Sciatic nerve (tissue), 2 donors: ENCODE measurements at regions of chr20 and their contacts with region 1.

Region 1: DNA sequence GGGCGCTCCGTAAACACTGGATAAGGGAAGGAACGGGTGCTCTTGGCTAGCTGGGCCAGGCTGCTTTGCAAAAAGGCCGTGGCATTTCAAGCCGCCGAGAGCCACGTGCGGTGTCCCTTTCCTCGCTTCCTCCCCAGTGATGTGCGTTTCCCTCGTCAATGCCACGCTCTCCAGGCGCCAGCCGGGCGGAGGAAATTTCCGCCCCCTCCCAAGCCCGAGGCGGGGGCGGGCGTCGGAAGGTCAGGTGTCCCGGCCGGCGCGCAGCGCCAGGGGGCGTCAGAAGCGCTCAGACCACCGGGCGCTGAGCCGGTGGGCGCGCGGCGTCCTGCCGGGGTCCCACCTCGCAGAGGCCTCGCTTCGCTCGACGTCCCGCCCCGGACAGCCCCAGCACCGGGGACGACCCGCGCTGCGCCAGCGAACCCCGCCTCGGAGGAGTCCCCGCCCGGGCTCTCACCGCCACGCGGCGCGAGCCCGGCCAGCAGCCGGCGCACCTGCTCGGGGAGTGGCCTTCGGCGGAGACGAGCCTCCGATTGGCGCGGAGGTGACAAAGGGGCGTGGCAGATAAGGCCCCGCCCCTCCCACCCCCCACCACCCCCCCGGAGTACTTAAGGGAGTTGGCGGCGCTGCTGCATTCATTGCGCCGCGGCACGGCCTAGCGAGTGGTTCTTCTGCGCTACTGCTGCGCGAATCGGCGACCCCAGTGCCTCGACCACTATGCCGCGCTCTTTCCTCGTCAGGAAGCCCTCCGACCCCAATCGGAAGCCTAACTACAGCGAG is at the start of gene SNAI1:
- DNase-seq: peak; percentile 88
- ATAC-seq: peak; percentile 79
- total RNA-seq, gene SNAI1: 32.6 TPM

Region 2: DNA sequence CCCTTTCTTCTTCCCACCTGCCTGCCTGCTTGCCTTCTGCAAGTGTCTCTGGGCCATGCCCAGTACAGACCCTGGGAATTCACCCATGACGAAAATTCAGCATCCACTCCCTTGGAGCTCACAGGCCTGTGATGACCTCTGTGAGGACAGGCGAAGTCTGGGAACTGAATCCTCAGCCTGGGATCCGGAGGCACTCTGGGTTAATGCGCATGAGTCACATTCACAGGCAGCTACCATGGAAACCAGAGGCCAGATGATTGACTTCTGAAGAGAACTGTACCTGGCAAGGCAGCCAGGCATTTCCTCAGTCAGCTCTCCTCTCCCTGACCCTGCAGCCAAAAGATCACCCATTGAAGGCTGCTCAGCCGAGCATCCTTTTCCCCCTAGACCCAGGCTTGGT is 128.9 kb before region 1 on chr20:
- intact Hi-C with region 1: no loop called
- DNase-seq: no peak
- ATAC-seq: no peak

Region 3: DNA sequence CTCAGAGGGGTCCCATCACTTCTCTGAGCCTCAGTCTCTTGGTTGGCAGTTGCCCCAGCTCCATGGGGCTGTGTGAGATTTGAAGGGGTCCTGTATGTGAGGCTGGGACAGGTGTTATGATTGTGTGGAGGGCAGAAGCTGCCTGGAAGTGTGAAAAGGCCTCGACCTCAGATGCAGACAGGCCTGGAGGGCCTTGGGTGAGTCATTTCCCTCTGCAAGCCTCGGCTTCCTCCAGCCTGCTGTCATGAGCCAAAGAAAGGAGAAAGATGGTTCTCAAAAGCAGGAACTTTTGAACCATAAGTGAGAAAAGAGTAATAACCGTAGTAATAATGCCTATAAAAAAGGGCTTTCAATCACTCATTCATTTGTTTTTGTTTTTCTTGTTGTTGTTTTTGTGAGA is 37.8 kb after region 1 on chr20:
- intact Hi-C with region 1: no loop called
- DNase-seq: no peak
- ATAC-seq: no peak

Region 4: GRCh38 chr20:50070991-50071888 is 88.7 kb after region 1 on chr20:
- intact Hi-C with region 1: loop called (anchors 2 kb)
- DNase-seq: peak; percentile 97
- ATAC-seq: peak; percentile 95

Region 5: DNA sequence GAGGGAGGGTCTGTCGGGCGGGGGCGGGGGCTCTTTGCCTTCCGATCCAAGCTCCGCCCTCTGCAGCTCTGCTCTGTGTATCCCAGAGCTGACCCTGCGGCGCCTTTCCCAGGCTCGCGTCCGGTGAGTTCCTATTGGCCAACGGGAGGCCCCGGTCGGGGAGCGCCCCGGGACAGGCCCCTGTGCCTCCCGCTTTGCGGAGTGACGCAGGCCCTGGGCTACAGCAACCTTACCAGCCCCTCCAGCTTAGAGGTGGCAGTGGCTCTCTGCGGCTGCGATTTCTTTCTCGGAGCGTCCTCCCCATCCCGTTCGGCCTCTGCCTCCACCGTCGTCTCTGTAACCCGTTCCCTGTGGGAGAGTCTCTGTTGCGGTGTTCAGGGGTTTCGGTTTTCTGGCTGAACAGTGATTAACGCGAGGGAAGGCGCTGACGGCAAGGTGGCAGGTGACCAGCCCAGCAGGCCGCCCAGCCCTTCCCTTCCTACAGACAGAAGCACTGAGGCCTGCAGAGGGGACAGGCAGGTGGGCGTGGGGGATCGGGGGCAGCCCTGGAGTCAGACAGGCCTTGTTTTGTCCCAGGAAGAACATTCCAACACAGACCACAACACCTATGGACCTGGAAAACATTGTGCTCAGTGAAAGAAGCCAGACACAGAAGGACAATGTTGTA is 189.9 kb after region 1 on chr20:
- intact Hi-C with region 1: loop called (anchors 5 kb)
- DNase-seq: peak; percentile 90
- ATAC-seq: peak; percentile 96